HEK293 (cell line): ENCODE measurements at regions of chr4 and their contacts with region 1.

Region 1: DNA sequence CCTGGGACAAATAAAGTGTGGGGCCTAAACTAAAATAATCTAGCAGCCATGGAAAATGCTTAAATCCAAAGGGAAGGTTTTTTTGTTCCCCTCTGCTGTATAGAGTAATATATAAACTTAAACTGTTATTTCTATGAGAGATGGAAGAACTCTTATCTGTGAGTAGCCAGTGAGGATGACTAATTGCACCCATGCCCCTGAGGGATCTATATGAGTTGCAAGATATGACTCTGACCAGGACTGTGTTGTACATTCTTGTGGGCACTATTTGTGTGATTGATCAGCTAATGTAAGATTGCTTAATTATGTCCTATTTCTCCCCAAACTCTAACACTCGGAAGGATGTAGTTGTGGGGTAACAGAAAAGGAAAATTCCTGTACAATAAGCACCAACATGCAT is 35.2 kb upstream of the AMBN start:
- H3K4me3 ChIP-seq: no peak overlapping the region
- H3K27ac ChIP-seq: no peak overlapping the region
- H3K4me1 ChIP-seq: no peaks in the 10 kb centered on the region
- CTCF ChIP-seq: no peak

Region 2: GRCh38 chr4:70449220-70449619 is 107.6 kb before region 1 on chr4:
- CTCF ChIA-PET with region 1: interaction called, 12 read pairs
- POLR2A ChIA-PET with region 1: no interaction called
- H3K4me3 ChIP-seq: no peak overlapping the region
- H3K27ac ChIP-seq: no peak overlapping the region
- H3K4me1 ChIP-seq: no peaks in the 10 kb centered on the region
- CTCF ChIP-seq: no peak